ENCODE measurements at regions of chr5 and their contacts with region 1.

Region 1: DNA sequence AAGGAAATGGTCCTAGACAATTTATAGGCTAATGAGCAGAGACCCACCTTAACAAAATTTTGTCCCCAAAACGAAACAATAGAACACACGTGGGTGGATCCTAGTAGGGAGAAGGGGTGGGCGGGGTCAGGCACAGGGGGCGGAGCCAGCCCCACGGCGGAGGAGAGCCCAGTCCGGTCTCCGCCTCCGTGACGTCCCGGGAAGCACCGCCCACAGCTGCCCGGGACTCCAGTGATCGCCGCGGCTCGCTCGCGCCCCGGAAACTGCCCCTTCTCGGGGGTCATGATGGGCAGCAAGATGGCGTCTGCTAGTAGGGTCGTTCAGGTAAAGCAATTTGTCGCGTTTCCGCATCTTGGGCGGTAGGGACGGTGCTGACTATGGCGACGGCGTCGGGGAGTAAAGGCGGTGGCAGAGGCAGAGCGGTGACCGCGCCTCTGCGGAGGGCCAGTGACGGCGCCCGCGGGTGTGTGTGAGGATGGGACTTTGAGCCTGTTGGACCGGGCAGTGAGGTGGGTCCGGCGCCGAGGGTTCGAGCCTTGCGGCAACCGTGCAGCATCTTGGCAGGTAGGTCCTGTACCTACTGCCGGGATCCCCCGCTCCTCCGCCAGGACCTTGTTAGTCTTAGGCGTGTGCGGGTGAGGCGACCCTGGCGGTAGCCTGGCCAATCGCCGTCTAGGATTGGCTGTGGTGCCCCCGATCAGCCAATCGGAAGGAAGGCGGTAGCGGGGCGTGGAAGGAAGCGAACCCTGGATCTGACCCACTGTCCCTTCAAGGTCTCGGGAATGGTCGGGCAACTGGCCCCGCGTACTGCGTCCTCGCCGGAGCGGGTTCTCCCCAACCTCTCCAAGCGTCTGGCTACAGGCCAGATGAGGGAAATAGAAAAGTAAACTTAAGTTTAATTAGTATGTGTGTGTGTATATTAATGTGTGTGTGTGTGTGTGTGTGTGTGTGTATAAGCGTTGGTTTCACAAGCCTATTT is 16.8 kb upstream of the CDK7 start:
- DNase-seq: peak; percentile 96 to 98 (median 98)
- ATAC-seq: peak; percentile 93
- H3K4me3 ChIP-seq: peak overlapping the region; percentile 66
- H3K27ac ChIP-seq: peak overlapping the region; percentile 88
- H3K4me1 ChIP-seq: peaks cover 13 to 21% of the 10 kb centered on the region in 2 experiments; a peak in 4 of 5 replicates
- H3K27me3 ChIP-seq: no peaks in the 10 kb centered on the region
- CTCF ChIP-seq: no peak
- EP300 ChIP-seq: no peak
- POLR2A ChIP-seq: peak; percentile 96
- RAD21 ChIP-seq: no peak

Region 2: GRCh38 chr5:69189162-69190086 is 28.4 kb before region 1 on chr5 and contains the start of gene CENPH:
- CTCF ChIA-PET with region 1: no interaction called
- POLR2A ChIA-PET with region 1: interaction called, 9 read pairs
- in situ Hi-C with region 1: no loop called
- intact Hi-C with region 1: loop called (anchors 2 kb)
- DNase-seq: peak; percentile 90 to 94 (median 92)
- ATAC-seq: peak; percentile 95
- H3K4me3 ChIP-seq: peak within 1 kb of the TSS; percentile 76
- H3K27ac ChIP-seq: peak within 1 kb of the TSS; percentile 94
- H3K4me1 ChIP-seq: peaks cover 7 to 8% of the 10 kb centered on the region in 2 experiments; a peak in 4 of 5 replicates
- H3K27me3 ChIP-seq: no peaks in the 10 kb centered on the region
- CTCF ChIP-seq: no peak; a peak in 1 of 6 replicates
- EP300 ChIP-seq: no peak
- POLR2A ChIP-seq: peak; percentile 95
- RAD21 ChIP-seq: no peak
- polyA plus RNA-seq, gene CENPH: 10.5 to 18.2 TPM

Region 3: GRCh38 chr5:69234457-69235268 is 16.8 kb after region 1 on chr5 and contains the start of gene CDK7:
- CTCF ChIA-PET with region 1: no interaction called
- POLR2A ChIA-PET with region 1: interaction called, 12 read pairs
- in situ Hi-C with region 1: no loop called
- intact Hi-C with region 1: no loop called
- DNase-seq: peak; percentile 94 to 96 (median 94)
- ATAC-seq: peak; percentile 98
- H3K4me3 ChIP-seq: peak within 1 kb of the TSS; percentile 73
- H3K27ac ChIP-seq: peak within 1 kb of the TSS; percentile 86
- H3K4me1 ChIP-seq: peaks cover 8 to 11% of the 10 kb centered on the region in 2 experiments
- H3K27me3 ChIP-seq: no peaks in the 10 kb centered on the region
- CTCF ChIP-seq: peak in 1 of 3 experiments; percentile 11; a peak in 1 of 6 replicates
- EP300 ChIP-seq: peak; percentile 4; the same call in 1 of the 2 replicates
- POLR2A ChIP-seq: peak; percentile 89
- RAD21 ChIP-seq: peak in 1 of 2 experiments; percentile 18; a peak in 1 of 4 replicates
- polyA plus RNA-seq, gene CDK7: 143 TPM

Measured in K562 (cell line).